Sciatic nerve (tissue), 2 donors: ENCODE measurements at regions of chr4 and their contacts with region 1.

Region 1: GRCh38 chr4:81982846-81983540 is 390.8 kb downstream of the HNRNPD start:
- DNase-seq: no peak
- ATAC-seq: no peak

Region 2: GRCh38 chr4:81378386-81378785 is 604.6 kb before region 1 on chr4:
- intact Hi-C with region 1: loop called (anchors 2 kb)
- DNase-seq: no peak
- ATAC-seq: no peak